Psoas muscle (tissue), 8 donors: ENCODE measurements at regions of chrX and their contacts with region 1.

Region 1: DNA sequence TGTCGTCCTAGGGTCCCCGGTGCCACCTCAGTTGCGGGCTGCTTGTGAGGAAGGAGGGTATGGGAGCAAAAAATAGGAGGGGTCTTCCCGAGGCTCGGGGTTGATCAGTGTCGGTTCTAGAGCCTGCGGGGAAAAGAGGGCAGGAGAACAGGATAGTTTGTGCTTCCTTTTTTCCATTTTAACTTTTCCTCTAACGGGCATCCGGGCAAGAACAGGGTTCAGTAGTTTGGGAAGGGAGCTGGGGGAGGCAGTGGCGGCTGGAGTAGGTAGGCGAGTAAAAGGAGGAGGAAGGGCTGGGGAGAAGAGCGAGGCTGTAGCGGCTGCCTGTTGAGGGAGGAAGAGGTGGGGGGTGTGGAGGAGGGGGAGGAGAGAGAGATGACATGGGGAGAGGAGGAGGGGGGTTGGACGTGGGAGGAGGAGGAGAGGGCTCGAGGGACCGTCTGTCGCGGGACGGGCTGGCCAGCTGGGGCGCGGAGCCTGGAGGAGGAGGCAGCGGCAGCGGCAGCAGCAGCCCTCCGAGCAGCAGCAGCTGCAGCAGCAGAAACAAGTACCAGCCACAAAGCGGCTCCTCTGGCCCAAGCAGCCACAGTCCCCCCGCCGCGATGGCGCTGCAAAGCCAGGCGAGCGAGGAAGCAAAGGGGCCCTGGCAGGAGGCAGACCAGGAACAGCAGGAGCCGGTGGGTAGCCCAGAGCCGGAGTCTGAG is at the start of gene SLC16A2:
- DNase-seq: peak; percentile 67 to 85
- ATAC-seq: peak; percentile 75 to 81 (median 78)
- H3K4me3 ChIP-seq: peak within 1 kb of the TSS; percentile 73
- H3K27ac ChIP-seq: peak within 1 kb of the TSS; percentile 82
- H3K4me1 ChIP-seq: no peaks in the 10 kb centered on the region
- H3K27me3 ChIP-seq: peaks cover 0 to 44% (median 0%) of the 10 kb centered on the region in 3 donors
- CTCF ChIP-seq: no peak
- total RNA-seq, gene SLC16A2: 1.7 to 6.3 (median 3.2) TPM

Region 2: DNA sequence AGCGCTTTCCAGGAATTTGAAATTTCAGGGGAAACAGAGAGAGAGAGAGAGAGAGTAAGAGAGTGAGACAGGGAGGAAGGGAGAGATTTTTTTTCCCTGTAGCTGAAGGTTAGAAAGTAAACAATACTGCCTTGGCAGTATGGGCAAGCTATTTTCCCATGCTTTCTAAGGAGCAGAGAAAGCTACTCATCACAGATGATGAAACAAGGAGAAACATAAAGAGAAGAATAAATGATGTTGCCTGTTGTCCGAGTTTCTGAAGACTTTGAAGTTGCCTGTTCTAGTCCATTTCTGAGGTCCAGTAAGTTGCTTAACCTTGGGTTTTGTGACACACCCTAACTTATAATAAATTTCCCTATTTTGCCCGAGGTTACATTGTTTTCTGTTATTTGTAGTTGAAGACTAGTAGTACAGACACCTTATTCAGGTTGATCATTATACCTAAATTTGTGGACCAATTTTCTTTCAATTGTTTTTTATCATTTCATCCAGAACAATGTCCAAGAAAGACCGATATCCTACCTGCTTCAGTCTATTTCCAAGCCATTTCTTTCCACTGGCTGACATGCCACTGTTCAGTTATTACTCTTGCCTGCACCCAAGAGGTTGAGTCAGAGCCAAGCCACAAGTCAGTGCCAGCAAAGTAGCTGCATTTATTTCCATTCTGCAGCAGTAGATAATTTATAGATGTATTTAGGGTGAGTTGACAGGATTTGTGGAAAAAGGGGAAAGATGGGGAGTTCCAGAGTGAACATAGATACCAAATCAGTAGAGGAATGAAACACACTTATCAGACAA is 49.6 kb before region 1 on chrX:
- intact Hi-C with region 1: no loop called
- DNase-seq: no peak
- ATAC-seq: no peak
- H3K4me3 ChIP-seq: no peak overlapping the region
- H3K27ac ChIP-seq: no peak overlapping the region
- H3K4me1 ChIP-seq: no peaks in the 10 kb centered on the region
- H3K27me3 ChIP-seq: peaks cover 0 to 4% (median 0%) of the 10 kb centered on the region in 3 donors
- CTCF ChIP-seq: no peak

Region 3: GRCh38 chrX:74382613-74383012 is 38.6 kb before region 1 on chrX:
- intact Hi-C with region 1: loop called in 1 of 2 experiments (anchors 5 kb)
- DNase-seq: peak; percentile 28 to 68
- ATAC-seq: peak; percentile 79 to 92 (median 84)
- H3K4me3 ChIP-seq: no peak overlapping the region
- H3K27ac ChIP-seq: no peak overlapping the region
- H3K4me1 ChIP-seq: no peaks in the 10 kb centered on the region
- H3K27me3 ChIP-seq: peaks cover 0 to 15% (median 0%) of the 10 kb centered on the region in 3 donors
- CTCF ChIP-seq: peak; percentile 74

Region 4: GRCh38 chrX:74534569-74535038 is 113.4 kb after region 1 on chrX:
- intact Hi-C with region 1: loop called in 1 of 2 experiments (anchors 5 kb)
- DNase-seq: no peak
- ATAC-seq: no peak
- H3K4me3 ChIP-seq: peak overlapping the region; percentile 72
- H3K27ac ChIP-seq: peak overlapping the region; percentile 92
- H3K4me1 ChIP-seq: no peaks in the 10 kb centered on the region
- H3K27me3 ChIP-seq: peaks cover 0 to 28% (median 0%) of the 10 kb centered on the region in 3 donors
- CTCF ChIP-seq: no peak